ENCODE measurements at regions of chr6 and their contacts with region 1.

Region 1: GRCh38 chr6:188821-189655 is 103.2 kb upstream of the DUSP22 start:
- DNase-seq: peak; percentile 85
- H3K4me3 ChIP-seq: no peak overlapping the region
- H3K27ac ChIP-seq: no peak overlapping the region
- H3K4me1 ChIP-seq: peaks cover 0 to 9% (median 0%) of the 10 kb centered on the region in 4 donors
- H3K27me3 ChIP-seq: no peaks in the 10 kb centered on the region
- CTCF ChIP-seq: peak; percentile 64 to 86 (median 67)
- EP300 ChIP-seq: no peak
- POLR2A ChIP-seq: no peak

Region 2: GRCh38 chr6:399785-400534 is 210.9 kb after region 1 on chr6:
- in situ Hi-C with region 1: no loop called
- intact Hi-C with region 1: loop called (anchors 5 kb)
- DNase-seq: no peak
- H3K4me3 ChIP-seq: no peak overlapping the region
- H3K27ac ChIP-seq: no peak overlapping the region
- H3K4me1 ChIP-seq: peaks cover 0 to 6% (median 0%) of the 10 kb centered on the region in 4 donors
- H3K27me3 ChIP-seq: peaks cover 19% of the 10 kb centered on the region
- CTCF ChIP-seq: no peak
- EP300 ChIP-seq: no peak
- POLR2A ChIP-seq: no peak

Measured in transverse colon (tissue), 4 donors.